Activated CD8-positive, alpha-beta T cell treated with anti-CD3 and anti-CD28 coated beads for 36 hours (primary cell): ENCODE measurements at regions of chr2 and their contacts with region 1.

Region 1: DNA sequence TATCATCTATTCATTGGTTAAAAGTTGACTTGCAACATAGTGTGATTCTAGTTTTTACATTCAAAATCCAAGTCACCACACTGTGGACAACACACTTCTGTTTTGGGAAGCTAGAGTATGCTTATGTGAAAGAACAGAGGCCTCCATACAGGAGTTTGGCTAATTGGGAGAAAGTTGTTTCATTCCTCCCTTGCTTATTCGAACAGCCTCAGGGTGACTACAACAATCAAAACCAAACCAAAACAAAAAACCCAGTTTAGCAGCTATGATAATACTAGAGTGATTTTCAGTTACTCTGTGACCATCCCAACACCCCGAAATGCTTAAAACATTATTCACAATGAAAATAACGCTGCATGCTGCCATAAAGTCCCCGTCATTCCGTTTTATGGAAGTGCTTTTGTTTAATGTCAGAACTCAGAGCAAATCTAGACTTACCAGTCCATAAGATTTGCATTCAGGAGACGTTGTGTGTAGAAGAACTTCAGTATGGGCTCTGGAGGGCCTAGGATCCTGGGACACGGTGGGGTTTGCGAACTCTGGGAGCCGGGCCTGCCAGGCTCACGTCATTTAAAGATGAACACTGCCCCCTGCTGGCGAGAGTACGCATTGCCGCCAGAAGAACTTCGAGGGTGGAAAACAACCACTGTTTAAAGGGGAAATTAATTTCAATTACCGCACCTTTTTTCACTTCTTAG is 111.4 kb downstream of the FTCDNL1 start:
- DNase-seq: peak; percentile 75
- ATAC-seq: no peak
- H3K4me3 Mint-ChIP-seq: no peak overlapping the region
- H3K27ac Mint-ChIP-seq: no peak overlapping the region
- H3K4me1 Mint-ChIP-seq: peaks cover 5% of the 10 kb centered on the region
- H3K27me3 Mint-ChIP-seq: peaks cover 24% of the 10 kb centered on the region
- CTCF ChIP-seq: peak; percentile 94

Region 2: GRCh38 chr2:198309673-198310280 is 1429.8 kb before region 1 on chr2:
- CTCF ChIA-PET with region 1: interaction called, 12 read pairs
- POLR2A ChIA-PET with region 1: no interaction called
- intact Hi-C with region 1: no loop called
- DNase-seq: peak; percentile 71
- ATAC-seq: no peak
- H3K4me3 Mint-ChIP-seq: no peak overlapping the region
- H3K27ac Mint-ChIP-seq: no peak overlapping the region
- H3K4me1 Mint-ChIP-seq: no peaks in the 10 kb centered on the region
- H3K27me3 Mint-ChIP-seq: peaks cover 22% of the 10 kb centered on the region
- CTCF ChIP-seq: peak; percentile 71

Region 3: DNA sequence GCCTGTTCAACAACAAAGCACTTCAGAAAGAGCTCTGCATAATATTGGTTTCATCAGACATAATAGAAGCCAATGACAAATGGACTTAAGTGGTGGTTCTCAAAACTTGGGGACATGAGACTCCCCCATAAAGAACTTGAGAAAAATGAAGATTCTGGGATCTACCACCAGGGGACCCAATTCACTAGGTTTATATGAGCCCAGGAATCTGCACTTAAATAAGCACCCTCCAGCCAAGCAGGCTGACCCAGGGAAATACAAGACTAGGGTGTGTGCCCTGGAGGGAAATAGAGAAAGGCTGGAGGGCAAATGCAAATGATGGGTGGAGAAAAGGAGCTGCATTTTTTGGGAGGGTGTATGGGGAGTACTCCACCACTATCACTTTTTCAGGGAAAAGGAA is 334.3 kb before region 1 on chr2:
- CTCF ChIA-PET with region 1: no interaction called
- POLR2A ChIA-PET with region 1: no interaction called
- intact Hi-C with region 1: no loop called
- DNase-seq: no peak
- ATAC-seq: no peak
- H3K4me3 Mint-ChIP-seq: no peak overlapping the region
- H3K27ac Mint-ChIP-seq: no peak overlapping the region
- H3K4me1 Mint-ChIP-seq: no peaks in the 10 kb centered on the region
- H3K27me3 Mint-ChIP-seq: peaks cover 4% of the 10 kb centered on the region
- CTCF ChIP-seq: peak; percentile 24

Region 4: GRCh38 chr2:199596549-199596948 is 143.0 kb before region 1 on chr2:
- CTCF ChIA-PET with region 1: interaction called, 7 read pairs
- POLR2A ChIA-PET with region 1: no interaction called
- intact Hi-C with region 1: loop called (anchors 10 kb)
- DNase-seq: no peak
- ATAC-seq: no peak
- H3K4me3 Mint-ChIP-seq: no peak overlapping the region
- H3K27ac Mint-ChIP-seq: no peak overlapping the region
- H3K4me1 Mint-ChIP-seq: no peaks in the 10 kb centered on the region
- H3K27me3 Mint-ChIP-seq: peaks cover 2% of the 10 kb centered on the region
- CTCF ChIP-seq: peak; percentile 21

Region 5: DNA sequence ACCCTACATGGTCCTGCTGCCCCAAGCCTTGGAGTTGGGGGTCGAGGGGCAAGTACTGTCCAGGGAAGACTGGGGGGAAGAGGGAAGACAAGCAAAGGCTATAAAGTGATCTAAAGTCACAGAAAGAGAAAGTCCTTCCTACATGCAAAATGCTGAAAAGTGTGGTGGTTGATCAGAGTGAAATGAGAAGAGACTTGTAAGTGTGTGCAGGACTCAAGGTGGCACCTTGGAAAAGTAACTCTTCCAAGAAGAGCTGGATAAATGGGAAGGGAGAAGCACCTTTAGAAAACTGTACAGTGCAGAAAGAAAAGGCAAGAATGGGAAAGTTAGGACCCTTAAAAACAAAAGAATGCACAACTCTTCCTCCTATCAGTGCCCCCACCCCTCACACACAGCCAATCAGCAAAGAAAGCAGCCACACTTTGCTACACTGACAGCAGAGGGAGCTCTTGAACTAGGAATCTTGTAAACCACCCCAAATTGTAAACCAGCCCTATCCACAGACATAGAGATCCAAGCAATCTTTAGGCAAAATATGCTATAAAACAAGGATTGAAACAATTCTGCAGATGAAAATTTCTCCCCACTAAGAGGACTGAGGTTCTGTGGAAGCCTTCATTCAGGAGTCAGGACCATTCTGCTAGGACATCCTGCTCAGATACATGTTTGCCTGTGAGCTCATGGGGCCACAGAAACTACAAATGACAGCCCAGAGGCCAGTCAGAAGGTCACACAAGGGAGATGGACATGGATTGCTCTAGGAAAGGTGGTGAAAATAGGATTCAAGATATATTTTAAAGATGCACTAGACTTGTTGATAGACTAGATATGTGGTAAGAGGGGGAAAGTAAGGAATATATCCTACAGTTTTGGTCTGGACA is 35.0 kb before region 1 on chr2:
- CTCF ChIA-PET with region 1: interaction called, 63 read pairs
- POLR2A ChIA-PET with region 1: no interaction called
- intact Hi-C with region 1: loop called (anchors 5 kb)
- DNase-seq: peak; percentile 38
- ATAC-seq: peak; percentile 68
- H3K4me3 Mint-ChIP-seq: no peak overlapping the region
- H3K27ac Mint-ChIP-seq: no peak overlapping the region
- H3K4me1 Mint-ChIP-seq: peaks cover 2% of the 10 kb centered on the region
- H3K27me3 Mint-ChIP-seq: peaks cover 5% of the 10 kb centered on the region
- CTCF ChIP-seq: peak; percentile 49

Region 6: GRCh38 chr2:199727306-199727705 is 12.3 kb before region 1 on chr2:
- CTCF ChIA-PET with region 1: interaction called, 16 read pairs
- POLR2A ChIA-PET with region 1: no interaction called
- intact Hi-C with region 1: no loop called
- DNase-seq: no peak
- ATAC-seq: no peak
- H3K4me3 Mint-ChIP-seq: no peak overlapping the region
- H3K27ac Mint-ChIP-seq: no peak overlapping the region
- H3K4me1 Mint-ChIP-seq: no peaks in the 10 kb centered on the region
- H3K27me3 Mint-ChIP-seq: peaks cover 20% of the 10 kb centered on the region
- CTCF ChIP-seq: no peak

Region 7: DNA sequence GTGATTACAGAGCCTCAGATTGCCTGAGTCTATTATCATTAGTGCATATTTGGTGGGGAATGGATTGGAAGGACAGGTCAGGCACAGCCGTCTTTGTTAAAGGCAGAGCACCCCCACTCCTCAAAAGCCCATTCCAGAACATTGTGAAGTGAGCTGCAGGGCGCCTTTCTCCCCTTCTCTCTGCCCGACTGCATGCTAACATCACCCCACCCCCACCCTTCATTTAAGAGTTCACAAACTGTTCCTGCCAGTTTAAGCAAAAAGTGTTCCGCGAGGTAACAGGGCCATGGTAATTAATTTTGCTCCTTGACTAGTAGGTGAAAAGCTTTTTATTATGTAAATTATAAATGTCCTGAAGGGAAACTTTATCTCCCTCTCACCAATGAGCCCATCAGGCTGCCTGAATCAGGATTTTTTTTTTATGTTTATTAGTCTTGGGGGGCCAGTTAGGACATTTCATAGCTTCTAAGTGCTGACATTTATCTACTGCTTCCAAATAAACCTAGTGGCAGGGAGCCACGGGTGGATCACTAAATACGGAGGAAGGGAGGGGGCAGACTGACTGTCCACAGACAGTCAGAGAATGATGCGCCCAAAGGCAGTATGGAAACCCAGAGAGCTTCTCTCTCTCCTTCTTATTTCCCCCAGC is 12.0 kb after region 1 on chr2:
- CTCF ChIA-PET with region 1: interaction called, 24 read pairs
- POLR2A ChIA-PET with region 1: interaction called, 3 read pairs
- intact Hi-C with region 1: no loop called
- DNase-seq: no peak
- ATAC-seq: no peak
- H3K4me3 Mint-ChIP-seq: no peak overlapping the region
- H3K27ac Mint-ChIP-seq: no peak overlapping the region
- H3K4me1 Mint-ChIP-seq: no peaks in the 10 kb centered on the region
- H3K27me3 Mint-ChIP-seq: peaks cover 10% of the 10 kb centered on the region
- CTCF ChIP-seq: no peak

Region 8: GRCh38 chr2:199757233-199757870 is 17.8 kb after region 1 on chr2:
- CTCF ChIA-PET with region 1: interaction called, 11 read pairs
- POLR2A ChIA-PET with region 1: interaction called, 3 read pairs
- intact Hi-C with region 1: no loop called
- DNase-seq: no peak
- ATAC-seq: no peak
- H3K4me3 Mint-ChIP-seq: no peak overlapping the region
- H3K27ac Mint-ChIP-seq: no peak overlapping the region
- H3K4me1 Mint-ChIP-seq: no peaks in the 10 kb centered on the region
- H3K27me3 Mint-ChIP-seq: peaks cover 8% of the 10 kb centered on the region
- CTCF ChIP-seq: no peak